Endothelial cell of umbilical vein (primary cell): ENCODE measurements at regions of chr3 and their contacts with region 1.

Region 1: GRCh38 chr3:153628591-153628990 is 466.6 kb downstream of the RAP2B start:
- DNase-seq: peak; percentile 98
- H3K4me3 ChIP-seq: no peak overlapping the region
- H3K27ac ChIP-seq: peak overlapping the region; percentile 98
- H3K4me1 ChIP-seq: peaks cover 61% of the 10 kb centered on the region
- H3K27me3 ChIP-seq: no peaks in the 10 kb centered on the region
- CTCF ChIP-seq: no peak
- POLR2A ChIP-seq: no peak

Region 2: GRCh38 chr3:153373606-153374005 is 255.0 kb before region 1 on chr3:
- CTCF ChIA-PET with region 1: no interaction called
- POLR2A ChIA-PET with region 1: no interaction called
- dilution Hi-C with region 1: no loop called
- intact Hi-C with region 1: no loop called
- DNase-seq: no peak
- H3K4me3 ChIP-seq: no peak overlapping the region
- H3K27ac ChIP-seq: no peak overlapping the region
- H3K4me1 ChIP-seq: no peaks in the 10 kb centered on the region
- H3K27me3 ChIP-seq: no peaks in the 10 kb centered on the region
- CTCF ChIP-seq: no peak
- POLR2A ChIP-seq: no peak

Region 3: DNA sequence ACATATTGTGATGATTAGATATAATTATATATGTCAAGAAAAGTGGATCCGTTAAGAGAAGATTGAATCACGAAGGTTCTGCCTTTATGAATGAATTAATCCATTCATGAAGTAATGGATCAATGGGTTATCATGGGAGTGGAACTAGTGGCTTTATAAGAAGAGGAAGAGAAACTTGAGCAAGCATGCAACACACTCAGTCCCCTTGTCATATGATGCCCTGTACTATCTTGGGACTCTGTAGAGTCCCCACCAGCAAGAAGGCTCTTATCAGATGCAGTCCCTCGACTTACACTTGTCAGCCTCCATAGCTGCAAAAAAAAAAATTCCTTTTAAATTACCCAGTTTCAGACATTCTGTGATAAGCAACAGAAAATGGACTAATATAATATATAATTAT is 164.7 kb before region 1 on chr3:
- CTCF ChIA-PET with region 1: no interaction called
- POLR2A ChIA-PET with region 1: no interaction called
- dilution Hi-C with region 1: no loop called
- intact Hi-C with region 1: no loop called
- DNase-seq: no peak
- H3K4me3 ChIP-seq: no peak overlapping the region
- H3K27ac ChIP-seq: no peak overlapping the region
- H3K4me1 ChIP-seq: no peaks in the 10 kb centered on the region
- H3K27me3 ChIP-seq: no peaks in the 10 kb centered on the region
- CTCF ChIP-seq: no peak
- POLR2A ChIP-seq: no peak

Region 4: GRCh38 chr3:153552887-153553598 is 75.5 kb before region 1 on chr3:
- CTCF ChIA-PET with region 1: no interaction called
- POLR2A ChIA-PET with region 1: no interaction called
- dilution Hi-C with region 1: no loop called
- intact Hi-C with region 1: no loop called
- DNase-seq: peak; percentile 26
- H3K4me3 ChIP-seq: no peak overlapping the region
- H3K27ac ChIP-seq: no peak overlapping the region
- H3K4me1 ChIP-seq: no peaks in the 10 kb centered on the region
- H3K27me3 ChIP-seq: no peaks in the 10 kb centered on the region
- CTCF ChIP-seq: no peak
- POLR2A ChIP-seq: no peak

Region 5: GRCh38 chr3:153601374-153601853 is 27.2 kb before region 1 on chr3:
- CTCF ChIA-PET with region 1: interaction called, 5 read pairs
- POLR2A ChIA-PET with region 1: no interaction called
- dilution Hi-C with region 1: no loop called
- intact Hi-C with region 1: loop called (anchors 1 kb)
- DNase-seq: peak; percentile 67
- H3K4me3 ChIP-seq: no peak overlapping the region
- H3K27ac ChIP-seq: peak overlapping the region; percentile 69
- H3K4me1 ChIP-seq: peaks cover 30% of the 10 kb centered on the region
- H3K27me3 ChIP-seq: no peaks in the 10 kb centered on the region
- CTCF ChIP-seq: no peak
- POLR2A ChIP-seq: no peak

Region 6: GRCh38 chr3:153829606-153830170 is 201.1 kb after region 1 on chr3:
- CTCF ChIA-PET with region 1: no interaction called
- POLR2A ChIA-PET with region 1: no interaction called
- dilution Hi-C with region 1: no loop called
- intact Hi-C with region 1: loop called (anchors 1 kb)
- DNase-seq: peak; percentile 88
- H3K4me3 ChIP-seq: peak overlapping the region in 1 of 3 experiments; percentile 16
- H3K27ac ChIP-seq: peak overlapping the region; percentile 93
- H3K4me1 ChIP-seq: peaks cover 20% of the 10 kb centered on the region
- H3K27me3 ChIP-seq: no peaks in the 10 kb centered on the region
- CTCF ChIP-seq: no peak
- POLR2A ChIP-seq: peak; percentile 36